Natural killer cell (primary cell): ENCODE measurements at regions of chr14 and their contacts with region 1.

Region 1: DNA sequence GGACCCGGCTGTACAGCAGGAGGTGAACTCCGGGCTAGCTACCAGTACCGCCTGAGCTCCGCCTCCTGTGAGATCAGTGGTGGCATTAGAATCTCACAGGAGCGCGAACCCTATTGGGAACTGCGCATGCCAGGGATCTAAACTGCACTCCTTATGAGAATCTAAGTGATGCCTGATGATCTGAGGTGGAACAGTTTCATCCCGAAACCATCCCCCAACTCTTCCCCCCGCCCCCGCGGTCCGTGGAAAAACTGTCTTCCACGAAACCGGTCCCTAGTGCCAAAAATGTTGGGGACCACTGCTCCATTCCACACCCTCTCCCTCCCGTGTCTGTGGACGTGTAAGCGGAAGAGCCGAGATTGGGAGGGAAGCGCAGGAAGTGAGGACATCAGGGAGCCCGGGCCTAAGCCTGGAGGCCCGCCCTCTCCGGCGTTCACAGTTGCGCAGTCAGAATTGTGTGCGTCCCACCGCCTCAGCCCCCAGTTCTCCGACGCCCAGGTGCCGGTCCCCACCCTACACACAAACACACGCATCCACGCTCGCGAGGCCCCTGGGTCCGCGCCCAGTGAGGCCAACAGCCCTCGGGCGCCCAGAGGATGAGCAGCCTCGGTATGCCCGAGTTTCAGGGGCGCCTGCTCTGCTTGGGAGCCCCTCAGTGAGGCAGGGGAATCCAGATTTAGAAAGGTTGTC is 1.8 kb upstream of the RNASE4 start:
- DNase-seq: peak; percentile 68 to 93
- ATAC-seq: peak; percentile 61 to 76 (median 64)
- H3K4me3 ChIP-seq: peak overlapping the region; percentile 95
- H3K4me3 Mint-ChIP-seq: no peak overlapping the region
- H3K27ac ChIP-seq: peak overlapping the region; percentile 99
- H3K27ac Mint-ChIP-seq: no peak overlapping the region
- H3K4me1 ChIP-seq: peaks cover 44% of the 10 kb centered on the region
- H3K4me1 Mint-ChIP-seq: no peaks in the 10 kb centered on the region
- H3K27me3 ChIP-seq: no peaks in the 10 kb centered on the region
- H3K27me3 Mint-ChIP-seq: no peaks in the 10 kb centered on the region
- CTCF ChIP-seq: no peak

Region 2: GRCh38 chr14:20305265-20306078 is 377.1 kb before region 1 on chr14 and contains the start of gene TTC5:
- intact Hi-C with region 1: loop called (anchors 5 kb)
- DNase-seq: peak; percentile 91 to 96
- ATAC-seq: peak; percentile 99 to 100 (median 99)
- H3K4me3 ChIP-seq: peak within 1 kb of the TSS; percentile 70
- H3K4me3 Mint-ChIP-seq: peak within 1 kb of the TSS; percentile 92
- H3K27ac ChIP-seq: peak within 1 kb of the TSS; percentile 39
- H3K27ac Mint-ChIP-seq: peak within 1 kb of the TSS; percentile 77 to 82
- H3K4me1 ChIP-seq: peaks cover 4% of the 10 kb centered on the region
- H3K4me1 Mint-ChIP-seq: peaks cover 16 to 26% of the 10 kb centered on the region in 2 donors
- H3K27me3 ChIP-seq: no peaks in the 10 kb centered on the region
- H3K27me3 Mint-ChIP-seq: no peaks in the 10 kb centered on the region
- CTCF ChIP-seq: peak; percentile 74
- total RNA-seq, gene TTC5: 18.1 to 23.5 (median 21.6) TPM

Region 3: DNA sequence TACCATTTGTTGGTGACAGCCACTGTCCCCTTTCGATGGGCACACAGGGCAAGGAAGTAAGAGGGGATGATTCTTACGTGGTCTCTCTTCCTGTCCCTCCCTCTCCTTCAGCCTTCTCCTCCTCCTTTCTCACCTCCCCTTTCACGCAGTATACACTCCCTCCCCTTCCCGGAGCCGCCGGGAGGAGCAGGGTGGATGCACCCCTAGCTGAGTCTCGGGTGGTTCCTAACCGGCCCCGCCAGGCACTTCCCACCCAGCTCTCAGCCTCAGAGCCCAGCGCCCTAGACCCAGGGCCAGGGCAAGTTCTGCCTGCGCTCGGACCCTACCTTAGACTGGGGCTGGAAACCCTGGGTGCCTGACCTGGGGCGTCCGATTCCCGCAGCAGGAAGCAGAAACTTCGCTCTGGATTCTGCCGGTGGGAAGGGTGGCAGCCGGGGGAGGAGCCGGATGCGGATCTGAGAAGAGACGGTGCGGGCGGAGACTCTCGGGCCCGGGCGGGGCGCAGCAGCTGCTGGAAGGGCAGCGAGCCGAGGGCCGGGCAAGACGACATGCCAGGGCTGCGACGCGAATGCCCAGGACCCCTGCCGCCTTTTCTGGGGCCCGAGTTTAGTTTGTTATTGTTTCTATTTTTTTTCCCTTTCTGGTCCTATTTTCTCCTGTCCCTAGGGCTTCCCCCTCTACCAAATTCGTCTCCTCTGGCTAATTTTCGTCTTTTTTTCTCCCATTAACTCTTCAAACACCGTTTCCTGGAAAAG is 269.4 kb before region 1 on chr14 and contains the start of gene TEP1:
- intact Hi-C with region 1: loop called (anchors 5 kb)
- DNase-seq: peak; percentile 64 to 82
- ATAC-seq: peak; percentile 73 to 82 (median 76)
- H3K4me3 ChIP-seq: peak within 1 kb of the TSS; percentile 97
- H3K4me3 Mint-ChIP-seq: peak within 1 kb of the TSS; percentile 98
- H3K27ac ChIP-seq: peak within 1 kb of the TSS; percentile 94
- H3K27ac Mint-ChIP-seq: peak within 1 kb of the TSS; percentile 91 to 96
- H3K4me1 ChIP-seq: peaks cover 9% of the 10 kb centered on the region
- H3K4me1 Mint-ChIP-seq: peaks cover 35 to 53% of the 10 kb centered on the region in 2 donors
- H3K27me3 ChIP-seq: no peaks in the 10 kb centered on the region
- H3K27me3 Mint-ChIP-seq: no peaks in the 10 kb centered on the region
- CTCF ChIP-seq: no peak
- total RNA-seq, gene TEP1: 76.3 to 83.2 (median 80.8) TPM

Region 4: DNA sequence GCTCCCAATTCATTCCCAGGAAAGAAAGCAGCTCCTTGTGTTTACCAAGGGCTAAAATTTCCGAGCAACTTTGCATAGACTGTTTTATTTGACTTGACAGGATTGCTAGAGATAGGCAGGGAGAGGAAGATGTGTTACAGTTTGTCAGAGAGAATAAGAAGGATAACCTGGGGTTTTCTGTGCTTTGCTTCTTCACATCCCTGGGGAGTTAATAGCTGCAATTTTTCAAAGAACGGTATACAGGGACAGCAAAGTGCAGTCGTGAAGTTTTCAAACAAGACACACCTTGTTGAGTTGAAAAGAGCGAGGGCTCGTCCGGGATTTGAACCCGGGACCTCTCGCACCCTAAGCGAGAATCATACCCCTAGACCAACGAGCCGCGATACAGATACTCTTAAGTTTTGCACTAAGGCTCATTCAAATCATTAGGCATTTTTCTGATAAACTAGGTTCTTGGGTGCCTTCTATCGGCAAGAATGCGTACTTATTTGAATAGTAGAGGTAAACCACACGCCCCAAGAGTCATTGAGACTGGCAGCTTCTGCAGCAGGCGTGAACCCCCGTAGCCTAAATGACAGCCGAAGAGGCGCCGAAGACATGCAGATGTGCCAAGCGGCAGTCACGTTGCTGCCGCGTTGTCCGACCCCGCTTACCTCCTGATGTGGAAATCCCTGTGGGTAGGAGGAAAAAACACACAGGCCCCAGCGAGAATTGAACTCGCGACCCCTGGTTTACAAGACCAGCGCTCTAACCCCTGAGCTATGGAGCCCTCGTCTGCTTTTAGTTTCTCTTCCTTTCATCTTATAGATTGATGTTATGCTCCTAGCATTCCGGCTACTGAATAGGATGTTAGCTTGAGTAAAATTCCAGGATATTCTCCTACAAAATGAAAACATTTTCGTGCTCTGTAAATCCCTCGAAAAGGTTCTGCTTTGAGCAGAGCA is 69.2 kb before region 1 on chr14:
- intact Hi-C with region 1: loop called (anchors 1 kb)
- DNase-seq: peak; percentile 78 to 94
- ATAC-seq: peak; percentile 82 to 88 (median 84)
- H3K4me3 ChIP-seq: peak overlapping the region; percentile 42
- H3K4me3 Mint-ChIP-seq: no peak overlapping the region
- H3K27ac ChIP-seq: peak overlapping the region; percentile 41
- H3K27ac Mint-ChIP-seq: no peak overlapping the region
- H3K4me1 ChIP-seq: peaks cover 24% of the 10 kb centered on the region
- H3K4me1 Mint-ChIP-seq: peaks cover 14 to 24% of the 10 kb centered on the region in 2 donors
- H3K27me3 ChIP-seq: no peaks in the 10 kb centered on the region
- H3K27me3 Mint-ChIP-seq: no peaks in the 10 kb centered on the region
- CTCF ChIP-seq: peak; percentile 47

Region 5: GRCh38 chr14:20662968-20663732 is 19.4 kb before region 1 on chr14:
- intact Hi-C with region 1: loop called (anchors 1 kb)
- DNase-seq: peak; percentile 68 to 89
- ATAC-seq: peak; percentile 84 to 94 (median 90)
- H3K4me3 ChIP-seq: peak overlapping the region; percentile 35
- H3K4me3 Mint-ChIP-seq: peak overlapping the region; percentile 75
- H3K27ac ChIP-seq: no peak overlapping the region
- H3K27ac Mint-ChIP-seq: peak overlapping the region; percentile 74 to 79
- H3K4me1 ChIP-seq: peaks cover 26% of the 10 kb centered on the region
- H3K4me1 Mint-ChIP-seq: peaks cover 25 to 28% of the 10 kb centered on the region in 2 donors
- H3K27me3 ChIP-seq: peaks cover 7% of the 10 kb centered on the region
- H3K27me3 Mint-ChIP-seq: peaks cover 26 to 34% of the 10 kb centered on the region in 2 donors
- CTCF ChIP-seq: peak; percentile 45

Region 6: GRCh38 chr14:20799892-20800544 is 117.4 kb after region 1 on chr14:
- intact Hi-C with region 1: no loop called
- DNase-seq: no peak
- ATAC-seq: peak; percentile 29 to 52 (median 44)
- H3K4me3 ChIP-seq: no peak overlapping the region
- H3K4me3 Mint-ChIP-seq: peak overlapping the region; percentile 4
- H3K27ac ChIP-seq: peak overlapping the region; percentile 16
- H3K27ac Mint-ChIP-seq: peak overlapping the region; percentile 72 to 81
- H3K4me1 ChIP-seq: peaks cover 30% of the 10 kb centered on the region
- H3K4me1 Mint-ChIP-seq: peaks cover 24 to 30% of the 10 kb centered on the region in 2 donors
- H3K27me3 ChIP-seq: no peaks in the 10 kb centered on the region
- H3K27me3 Mint-ChIP-seq: no peaks in the 10 kb centered on the region
- CTCF ChIP-seq: no peak